Gastrocnemius medialis (tissue), 4 donors: ENCODE measurements at regions of chr11 and their contacts with region 1.

Region 1: GRCh38 chr11:36478700-36479329 is 31.3 kb downstream of the TRAF6 start:
- DNase-seq: no peak
- ATAC-seq: no peak
- H3K4me3 ChIP-seq: no peak overlapping the region
- H3K27ac ChIP-seq: no peak overlapping the region
- H3K4me1 ChIP-seq: peaks cover 4 to 5% of the 10 kb centered on the region in 2 donors
- H3K27me3 ChIP-seq: no peaks in the 10 kb centered on the region
- CTCF ChIP-seq: peak in 4 of 5 experiments; percentile 8 to 42 (median 24)
- POLR2A ChIP-seq: no peak

Region 2: GRCh38 chr11:36296895-36297604 is 181.8 kb before region 1 on chr11:
- in situ Hi-C with region 1: loop called in 2 of 4 experiments (anchors 25 kb)
- intact Hi-C with region 1: loop called (anchors 5 kb)
- DNase-seq: no peak
- ATAC-seq: no peak
- H3K4me3 ChIP-seq: no peak overlapping the region
- H3K27ac ChIP-seq: no peak overlapping the region
- H3K4me1 ChIP-seq: peaks cover 0 to 3% of the 10 kb centered on the region in 2 donors
- H3K27me3 ChIP-seq: no peaks in the 10 kb centered on the region
- CTCF ChIP-seq: no peak
- POLR2A ChIP-seq: no peak

Region 3: DNA sequence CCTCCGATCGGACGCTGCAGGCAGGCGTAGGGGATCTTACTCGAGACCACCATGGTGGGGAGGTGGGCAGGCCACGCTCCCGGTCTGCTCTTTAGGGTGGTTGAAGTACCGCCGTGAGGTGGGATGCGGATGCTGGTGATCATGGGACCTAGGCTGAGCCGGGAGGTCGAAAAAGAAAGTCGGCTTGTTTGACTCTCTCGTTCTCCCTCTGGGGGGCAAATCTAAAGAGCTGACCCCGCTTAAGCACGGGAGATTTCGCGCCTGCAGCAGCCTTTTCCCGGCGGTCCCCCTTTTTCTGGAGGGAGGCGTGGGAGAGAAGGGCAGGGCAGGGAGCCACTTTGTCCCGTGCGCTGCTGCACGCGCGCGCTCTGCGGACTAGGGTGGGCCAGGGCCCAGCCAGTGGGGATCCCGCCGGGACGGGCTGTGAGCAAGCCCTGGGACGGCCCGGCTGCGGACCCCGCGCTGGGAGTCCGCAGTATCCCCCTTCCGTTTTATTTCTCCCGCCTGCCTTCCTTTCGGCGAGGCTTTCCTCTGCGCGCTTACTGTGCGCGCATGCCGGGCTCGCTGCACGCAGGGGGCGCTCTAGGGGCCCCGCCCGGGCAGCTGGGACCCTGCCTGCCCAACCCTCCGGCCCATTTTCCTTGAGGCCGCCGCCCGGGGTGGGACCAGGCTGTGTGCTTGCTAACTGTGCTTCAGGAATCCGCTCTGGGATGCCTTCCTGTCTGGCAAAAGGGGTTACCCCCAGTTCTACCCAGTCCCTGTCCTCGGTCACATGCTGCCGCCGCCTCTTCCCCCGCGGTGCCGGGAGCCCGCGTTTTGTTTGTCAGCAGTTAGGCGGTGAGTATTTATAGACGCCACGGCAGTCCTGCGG is 101.7 kb before region 1 on chr11:
- in situ Hi-C with region 1: no loop called
- intact Hi-C with region 1: loop called (anchors 5 kb)
- DNase-seq: peak; percentile 26 to 45
- ATAC-seq: peak; percentile 74 to 78
- H3K4me3 ChIP-seq: peak overlapping the region; percentile 56 to 86 (median 66)
- H3K27ac ChIP-seq: peak overlapping the region in 2 of 4 donors; percentile 17 to 44
- H3K4me1 ChIP-seq: peaks cover 0 to 19% of the 10 kb centered on the region in 2 donors
- H3K27me3 ChIP-seq: peaks cover 11 to 23% (median 11%) of the 10 kb centered on the region in 3 donors
- CTCF ChIP-seq: peak; percentile 14 to 66 (median 45)
- POLR2A ChIP-seq: no peak